ENCODE measurements at regions of chr4 and their contacts with region 1.

Region 1: GRCh38 chr4:173420324-173420752 is 21.4 kb upstream of the SCRG1 start:
- DNase-seq: peak in 1 of 5 donors; percentile 6
- H3K4me3 ChIP-seq: no peak overlapping the region
- H3K4me3 Mint-ChIP-seq: no peak overlapping the region
- H3K27ac ChIP-seq: no peak overlapping the region
- H3K27ac Mint-ChIP-seq: peak overlapping the region in 1 of 8 donors; percentile 2
- H3K4me1 ChIP-seq: peaks cover 5% of the 10 kb centered on the region
- H3K4me1 Mint-ChIP-seq: peaks cover 3 to 11% (median 10%) of the 10 kb centered on the region in 3 donors
- H3K27me3 ChIP-seq: no peaks in the 10 kb centered on the region
- H3K27me3 Mint-ChIP-seq: peaks cover 0 to 1% of the 10 kb centered on the region in 2 donors

Region 2: DNA sequence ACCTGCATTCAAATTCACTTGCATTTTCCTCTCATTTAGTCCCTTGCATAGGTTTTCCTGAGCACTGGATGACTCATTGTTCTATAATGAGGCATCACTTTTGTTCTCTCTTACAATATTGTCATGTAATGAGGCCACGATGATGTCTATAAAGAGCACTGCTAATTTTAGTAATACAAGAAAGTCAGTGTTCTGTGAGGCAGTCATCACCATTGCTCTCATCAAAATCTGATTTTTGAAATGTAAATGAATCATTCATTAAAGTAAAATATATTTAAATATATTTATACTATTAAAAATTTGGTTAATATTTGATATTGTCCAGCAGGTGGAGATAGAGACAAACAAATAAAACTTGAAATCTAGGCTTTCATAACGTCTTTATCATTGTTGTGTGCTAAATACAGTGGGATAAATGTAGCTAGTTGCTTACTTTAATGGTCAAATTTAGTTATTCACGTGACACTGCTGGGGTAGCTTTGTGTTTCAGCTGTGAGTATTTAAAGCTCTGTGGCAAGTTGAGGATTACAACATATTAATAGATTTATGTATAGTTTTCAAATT is 101.6 kb before region 1 on chr4:
- CTCF ChIA-PET with region 1: interaction called, 165 read pairs
- POLR2A ChIA-PET with region 1: no interaction called
- DNase-seq: peak in 2 of 5 donors; percentile 10 to 19
- H3K4me3 ChIP-seq: no peak overlapping the region
- H3K4me3 Mint-ChIP-seq: no peak overlapping the region
- H3K27ac ChIP-seq: no peak overlapping the region
- H3K27ac Mint-ChIP-seq: peak overlapping the region in 1 of 8 donors; percentile 32
- H3K4me1 ChIP-seq: no peaks in the 10 kb centered on the region
- H3K4me1 Mint-ChIP-seq: peaks cover 0 to 3% (median 2%) of the 10 kb centered on the region in 3 donors
- H3K27me3 ChIP-seq: no peaks in the 10 kb centered on the region
- H3K27me3 Mint-ChIP-seq: no peaks in the 10 kb centered on the region

Region 3: DNA sequence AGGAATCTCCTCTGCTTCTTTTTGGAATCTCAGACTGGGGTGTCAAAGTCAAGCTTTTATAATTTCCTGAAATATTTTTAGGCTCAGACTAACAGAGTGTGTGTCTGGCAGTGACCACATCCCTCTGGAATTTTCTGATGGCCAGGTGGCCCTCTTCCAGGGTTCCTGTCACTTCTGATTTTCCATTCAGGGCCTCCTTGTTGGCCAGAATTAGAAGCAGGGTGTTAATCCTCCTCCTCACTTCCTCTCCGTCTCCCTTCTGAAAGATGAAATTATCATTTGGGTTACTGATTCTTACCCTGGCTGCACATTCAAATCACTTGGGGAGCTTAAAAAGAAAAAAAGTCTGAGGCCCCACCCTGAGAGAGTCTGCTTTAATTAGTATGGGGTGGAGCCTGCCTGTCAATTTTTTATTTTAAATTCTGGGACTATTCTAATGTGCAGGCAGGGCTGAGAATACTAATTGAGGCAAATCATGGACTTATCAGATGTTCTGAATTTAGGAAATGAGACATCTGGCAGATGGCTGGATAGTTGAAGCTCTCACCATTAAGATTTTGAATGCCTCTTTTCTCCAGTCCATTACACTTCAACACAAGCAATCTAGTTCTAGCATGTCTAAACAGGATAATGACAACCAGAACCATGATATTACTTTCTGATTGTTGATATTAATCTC is 66.5 kb after region 1 on chr4:
- CTCF ChIA-PET with region 1: interaction called, 11 read pairs
- POLR2A ChIA-PET with region 1: no interaction called
- DNase-seq: no peak
- H3K4me3 ChIP-seq: no peak overlapping the region
- H3K4me3 Mint-ChIP-seq: no peak overlapping the region
- H3K27ac ChIP-seq: no peak overlapping the region
- H3K27ac Mint-ChIP-seq: no peak overlapping the region
- H3K4me1 ChIP-seq: no peaks in the 10 kb centered on the region
- H3K4me1 Mint-ChIP-seq: peaks cover 0 to 5% (median 2%) of the 10 kb centered on the region in 3 donors
- H3K27me3 ChIP-seq: no peaks in the 10 kb centered on the region
- H3K27me3 Mint-ChIP-seq: no peaks in the 10 kb centered on the region

Region 4: GRCh38 chr4:173494013-173494970 is 74.0 kb after region 1 on chr4:
- CTCF ChIA-PET with region 1: interaction called, 32 read pairs
- POLR2A ChIA-PET with region 1: interaction called, 3 read pairs
- DNase-seq: peak; percentile 16 to 71 (median 40)
- H3K4me3 ChIP-seq: peak overlapping the region; percentile 59
- H3K4me3 Mint-ChIP-seq: peak overlapping the region; percentile 75 to 93 (median 87)
- H3K27ac ChIP-seq: no peak overlapping the region
- H3K27ac Mint-ChIP-seq: no peak overlapping the region
- H3K4me1 ChIP-seq: peaks cover 5% of the 10 kb centered on the region
- H3K4me1 Mint-ChIP-seq: peaks cover 12 to 25% (median 15%) of the 10 kb centered on the region in 3 donors
- H3K27me3 ChIP-seq: no peaks in the 10 kb centered on the region
- H3K27me3 Mint-ChIP-seq: peaks cover 28 to 56% of the 10 kb centered on the region in 2 donors

Measured in CD8-positive, alpha-beta memory T cell (primary cell).